IMR-90 (cell line): ENCODE measurements at regions of chr5 and their contacts with region 1.

Region 1: GRCh38 chr5:40679155-40679913 is 381 bp upstream of the PTGER4 start:
- DNase-seq: peak; percentile 86
- ATAC-seq: peak; percentile 89
- H3K4me3 ChIP-seq: peak overlapping the region; percentile 94
- H3K27ac ChIP-seq: peak overlapping the region; percentile 98
- H3K4me1 ChIP-seq: peaks cover 13% of the 10 kb centered on the region
- H3K27me3 ChIP-seq: no peaks in the 10 kb centered on the region
- CTCF ChIP-seq: no peak
- POLR2A ChIP-seq: peak; percentile 51
- RAD21 ChIP-seq: no peak

Region 2: GRCh38 chr5:40223884-40224402 is 455.4 kb before region 1 on chr5:
- CTCF ChIA-PET with region 1: no interaction called
- POLR2A ChIA-PET with region 1: no interaction called
- dilution Hi-C with region 1: no loop called
- in situ Hi-C with region 1: loop called (anchors 10 kb)
- intact Hi-C with region 1: loop called (anchors 2 kb)
- DNase-seq: peak; percentile 96
- ATAC-seq: peak; percentile 79
- H3K4me3 ChIP-seq: no peak overlapping the region
- H3K27ac ChIP-seq: no peak overlapping the region
- H3K4me1 ChIP-seq: peaks cover 9% of the 10 kb centered on the region; the same call in 1 of the 2 replicates
- H3K27me3 ChIP-seq: no peaks in the 10 kb centered on the region
- CTCF ChIP-seq: no peak
- POLR2A ChIP-seq: 0 out of 2 replicates have a peak, but pooled peaks have one; percentile 58
- RAD21 ChIP-seq: no peak

Region 3: DNA sequence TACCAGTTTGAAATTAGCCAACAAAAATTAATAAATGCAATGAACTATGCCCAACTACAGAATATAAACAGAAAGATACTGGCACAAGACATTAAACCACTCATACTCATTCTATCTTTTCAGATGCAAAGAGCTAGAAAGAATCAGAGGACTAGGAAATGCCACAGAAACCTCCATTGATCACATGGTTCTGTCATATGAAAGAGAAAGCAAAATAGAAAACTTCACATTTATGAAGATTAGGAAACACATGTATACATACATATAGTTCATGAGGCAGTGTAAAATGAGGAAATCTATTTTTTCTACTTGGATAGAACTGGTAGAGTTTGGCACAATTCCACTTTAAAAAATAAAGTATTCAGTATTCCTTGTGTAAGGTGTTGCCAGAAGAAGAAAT is 274.7 kb before region 1 on chr5:
- CTCF ChIA-PET with region 1: no interaction called
- POLR2A ChIA-PET with region 1: no interaction called
- dilution Hi-C with region 1: no loop called
- in situ Hi-C with region 1: no loop called
- intact Hi-C with region 1: loop called (anchors 5 kb)
- DNase-seq: no peak
- ATAC-seq: no peak
- H3K4me3 ChIP-seq: no peak overlapping the region
- H3K27ac ChIP-seq: no peak overlapping the region
- H3K4me1 ChIP-seq: peaks cover 4% of the 10 kb centered on the region; the same call in 1 of the 2 replicates
- H3K27me3 ChIP-seq: no peaks in the 10 kb centered on the region
- CTCF ChIP-seq: no peak
- POLR2A ChIP-seq: no peak
- RAD21 ChIP-seq: no peak

Region 4: DNA sequence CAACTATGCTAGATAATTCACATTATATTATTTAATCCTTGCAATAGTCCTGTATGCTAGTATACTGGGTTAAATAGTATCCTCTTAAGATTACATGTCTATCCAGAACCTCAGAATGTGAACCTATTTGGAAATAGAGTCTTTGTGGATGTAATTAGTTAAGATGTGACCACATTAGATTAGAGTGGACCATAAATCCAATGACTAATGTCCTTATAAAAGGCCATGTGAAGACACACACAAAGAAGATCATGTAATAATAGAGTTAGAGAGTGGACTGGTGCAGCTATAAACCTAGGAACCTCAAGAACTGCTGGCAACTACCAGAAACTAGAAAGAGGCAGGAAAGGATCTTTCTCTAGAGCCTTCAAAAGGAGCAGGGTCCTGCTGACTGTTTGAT is 263.2 kb before region 1 on chr5:
- CTCF ChIA-PET with region 1: no interaction called
- POLR2A ChIA-PET with region 1: no interaction called
- dilution Hi-C with region 1: no loop called
- in situ Hi-C with region 1: no loop called
- intact Hi-C with region 1: no loop called
- DNase-seq: no peak
- ATAC-seq: no peak
- H3K4me3 ChIP-seq: no peak overlapping the region
- H3K27ac ChIP-seq: no peak overlapping the region
- H3K4me1 ChIP-seq: no peaks in the 10 kb centered on the region
- H3K27me3 ChIP-seq: no peaks in the 10 kb centered on the region
- CTCF ChIP-seq: no peak
- POLR2A ChIP-seq: no peak
- RAD21 ChIP-seq: no peak

Region 5: DNA sequence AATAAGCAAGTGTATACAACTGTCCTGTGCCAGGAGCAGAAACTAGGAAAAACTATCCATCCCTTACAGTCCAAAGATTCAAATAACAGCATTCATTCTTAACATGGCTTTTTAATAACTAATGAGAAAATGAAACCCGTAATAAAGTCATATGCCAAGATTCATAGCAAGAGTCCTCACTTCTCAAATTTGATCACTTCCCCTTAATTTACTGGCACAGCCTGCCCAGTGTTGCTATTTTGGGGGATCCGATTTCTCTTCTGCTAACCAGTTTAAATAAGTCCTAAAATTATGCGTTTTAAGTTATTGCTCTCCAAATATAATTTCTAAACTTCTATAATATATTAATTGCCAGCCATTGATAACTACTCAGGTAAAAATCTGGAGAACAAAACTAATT is 176.6 kb before region 1 on chr5:
- CTCF ChIA-PET with region 1: no interaction called
- POLR2A ChIA-PET with region 1: no interaction called
- dilution Hi-C with region 1: no loop called
- in situ Hi-C with region 1: no loop called
- intact Hi-C with region 1: loop called (anchors 5 kb)
- DNase-seq: no peak
- ATAC-seq: no peak
- H3K4me3 ChIP-seq: no peak overlapping the region
- H3K27ac ChIP-seq: no peak overlapping the region
- H3K4me1 ChIP-seq: peaks cover 2% of the 10 kb centered on the region; the same call in 1 of the 2 replicates
- H3K27me3 ChIP-seq: no peaks in the 10 kb centered on the region
- CTCF ChIP-seq: no peak
- POLR2A ChIP-seq: no peak
- RAD21 ChIP-seq: no peak

Region 6: DNA sequence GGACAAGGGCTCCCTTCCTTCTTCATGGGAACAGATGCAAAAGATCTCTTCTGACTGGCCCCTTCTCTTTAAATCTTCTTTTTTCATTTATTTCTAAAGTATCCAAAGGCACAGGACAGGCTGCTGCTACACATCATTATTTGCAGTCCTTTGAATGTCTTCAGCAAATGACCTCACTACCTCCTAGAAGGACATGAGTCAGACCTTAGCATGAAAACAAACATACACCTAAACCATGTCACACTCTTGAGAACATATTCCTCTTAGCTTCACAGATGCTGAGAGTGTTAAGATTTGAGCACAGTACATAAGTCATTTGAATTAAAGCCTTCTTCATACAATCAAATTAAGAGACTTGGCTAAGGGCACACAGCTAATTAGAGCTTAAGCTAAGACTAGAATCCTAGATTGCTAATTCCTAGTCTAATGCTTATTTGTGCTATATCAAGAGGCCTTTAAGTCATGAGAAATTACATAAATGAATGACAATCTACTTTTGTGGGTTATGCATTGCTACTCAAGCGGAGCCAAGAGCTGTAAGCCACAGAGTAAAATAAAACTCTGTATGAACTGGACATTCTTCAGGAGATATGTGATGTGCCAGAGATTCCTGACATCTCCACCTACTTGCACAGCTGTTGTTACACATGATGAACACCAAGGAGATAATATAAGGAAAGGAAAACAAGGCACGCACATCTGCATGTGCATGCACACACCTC is 108.8 kb before region 1 on chr5:
- CTCF ChIA-PET with region 1: no interaction called
- POLR2A ChIA-PET with region 1: no interaction called
- dilution Hi-C with region 1: no loop called
- in situ Hi-C with region 1: no loop called
- intact Hi-C with region 1: loop called (anchors 5 kb)
- DNase-seq: peak; percentile 90
- ATAC-seq: peak; percentile 77
- H3K4me3 ChIP-seq: no peak overlapping the region
- H3K27ac ChIP-seq: no peak overlapping the region
- H3K4me1 ChIP-seq: peaks cover 8% of the 10 kb centered on the region
- H3K27me3 ChIP-seq: no peaks in the 10 kb centered on the region
- CTCF ChIP-seq: no peak
- POLR2A ChIP-seq: no peak
- RAD21 ChIP-seq: no peak